A549 (cell line): ENCODE measurements at regions of chr1 and their contacts with region 1.

Region 1: DNA sequence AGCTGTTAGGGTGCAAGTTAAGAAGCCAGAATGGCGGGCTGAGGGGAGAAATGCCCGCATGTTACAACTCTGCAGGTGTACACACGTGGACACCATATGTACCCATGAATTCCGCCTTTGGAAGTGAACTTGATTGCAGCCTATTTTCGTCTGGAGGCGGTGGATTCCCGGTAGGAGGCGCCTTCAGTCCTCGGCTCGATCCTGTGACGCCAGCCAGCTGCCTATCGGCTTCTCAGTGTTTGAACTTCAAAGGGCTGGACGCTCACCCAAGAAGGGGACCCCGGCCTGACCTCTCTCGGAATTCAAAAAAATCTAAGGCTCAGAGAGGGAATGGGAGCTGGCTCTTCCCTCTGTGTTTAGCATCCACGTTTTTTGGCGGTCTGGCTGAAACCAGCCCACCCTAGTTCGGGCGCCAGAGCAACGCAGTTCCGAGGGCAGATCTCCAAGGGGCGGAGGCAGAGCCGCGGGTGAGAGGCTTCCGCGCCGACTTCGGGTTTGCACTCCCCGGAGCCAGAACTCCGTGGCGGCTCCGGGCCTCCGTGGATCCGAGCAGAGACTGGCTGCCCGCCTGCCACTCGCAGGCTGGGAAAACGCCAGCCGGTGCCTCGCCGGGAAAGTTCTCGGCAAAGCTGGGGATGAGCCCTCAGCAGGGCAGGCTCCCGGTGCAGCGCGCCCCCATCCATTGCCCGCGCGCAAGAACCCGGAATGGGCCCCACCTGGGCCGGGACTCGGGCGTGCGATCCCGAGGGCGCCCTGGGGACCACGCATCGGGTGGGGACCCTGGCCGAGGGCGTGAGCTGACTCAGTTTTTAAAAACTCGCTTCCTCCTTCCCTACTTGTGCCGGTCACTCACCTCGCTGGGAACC is 996 bp upstream of the TMEM51 start:
- DNase-seq: peak; percentile 87 to 89
- ATAC-seq: peak; percentile 75 to 77
- H3K4me3 ChIP-seq: peak overlapping the region; percentile 88
- H3K27ac ChIP-seq: peak overlapping the region; percentile 93 to 99
- H3K4me1 ChIP-seq: peaks cover 35% of the 10 kb centered on the region
- CTCF ChIP-seq: peak; percentile 66
- EP300 ChIP-seq: no peak
- POLR2A ChIP-seq: no peak
- RAD21 ChIP-seq: peak; percentile 78 to 88

Region 2: DNA sequence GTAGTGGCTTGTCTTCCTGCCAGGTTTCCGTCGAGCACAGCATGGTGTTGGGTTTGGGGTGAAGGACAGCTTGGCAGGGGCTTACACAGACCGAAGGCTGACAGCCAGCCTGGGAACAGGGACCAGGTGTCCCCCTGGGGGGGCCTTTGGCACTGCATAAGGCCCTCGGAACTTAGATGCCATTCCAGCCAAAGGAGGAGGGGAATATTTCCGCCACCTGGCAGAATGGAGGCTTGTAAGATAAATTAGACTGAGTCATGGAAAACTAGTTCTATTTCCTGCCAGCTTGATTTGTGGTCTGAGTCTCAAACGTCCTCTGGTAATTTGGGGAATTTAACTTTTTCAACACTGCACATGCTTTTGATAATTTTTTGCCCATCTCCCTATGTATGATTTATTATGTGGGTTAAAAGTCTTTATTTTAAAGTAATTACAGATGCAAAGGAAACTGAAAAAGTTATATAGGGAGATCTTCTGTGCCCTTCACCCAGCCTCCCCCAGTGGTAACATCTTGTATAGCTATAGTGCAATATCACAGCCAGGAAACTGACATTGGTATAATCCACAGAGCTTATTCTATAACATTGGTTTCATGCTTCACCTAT is 10.5 kb before region 1 on chr1:
- CTCF ChIA-PET with region 1: interaction called, 24 read pairs
- POLR2A ChIA-PET with region 1: no interaction called
- DNase-seq: no peak
- ATAC-seq: no peak
- H3K4me3 ChIP-seq: no peak overlapping the region
- H3K27ac ChIP-seq: no peak overlapping the region
- H3K4me1 ChIP-seq: no peaks in the 10 kb centered on the region
- CTCF ChIP-seq: no peak
- EP300 ChIP-seq: no peak
- POLR2A ChIP-seq: no peak
- RAD21 ChIP-seq: no peak

Region 3: DNA sequence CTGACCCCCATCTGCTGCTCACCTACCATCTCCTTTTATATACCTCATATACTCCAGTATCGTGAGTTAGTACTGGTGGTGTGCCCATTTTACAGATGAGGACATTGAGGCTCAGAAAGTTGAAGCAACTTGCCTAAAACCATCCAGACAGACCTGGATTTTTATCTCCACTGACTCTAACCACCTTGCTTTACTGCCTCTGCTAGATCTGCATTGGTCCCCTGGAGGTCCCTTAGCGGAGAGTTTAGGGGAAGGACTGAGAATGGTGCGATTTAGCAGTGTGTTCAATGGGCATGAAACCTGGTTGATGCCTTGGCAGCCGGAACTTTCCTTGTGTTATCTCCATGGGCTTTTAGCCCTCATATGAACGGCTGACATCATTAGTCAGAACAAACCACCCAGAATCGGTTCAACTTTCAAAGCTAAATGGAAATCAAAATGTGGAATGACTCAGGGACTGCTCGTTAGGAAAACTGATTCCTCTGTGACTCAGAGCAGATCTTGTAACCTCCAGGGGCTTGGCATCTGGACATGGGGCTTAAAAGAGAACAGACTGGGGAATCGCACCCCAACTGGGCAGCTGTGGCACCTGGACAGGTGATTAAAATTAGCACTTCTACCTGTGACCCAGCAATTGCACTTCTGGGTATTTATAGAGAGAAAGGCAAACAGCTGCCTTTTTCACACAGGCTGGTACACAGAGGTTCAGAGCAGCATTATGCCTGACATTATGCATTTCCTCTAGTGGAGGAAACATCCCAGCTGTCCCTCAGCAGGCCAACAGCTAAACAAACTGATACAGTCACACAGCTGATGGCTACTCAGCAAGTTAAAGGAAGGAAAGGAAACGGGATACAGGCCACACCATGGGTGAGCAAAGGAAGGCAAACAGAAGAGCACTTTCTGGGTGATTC is 26.3 kb after region 1 on chr1:
- CTCF ChIA-PET with region 1: interaction called, 28 read pairs
- POLR2A ChIA-PET with region 1: interaction called, 8 read pairs
- DNase-seq: peak in 1 of 2 experiments; percentile 79
- ATAC-seq: peak; percentile 87 to 91
- H3K4me3 ChIP-seq: no peak overlapping the region
- H3K27ac ChIP-seq: peak overlapping the region; percentile 82 to 88
- H3K4me1 ChIP-seq: peaks cover 74% of the 10 kb centered on the region
- CTCF ChIP-seq: no peak
- EP300 ChIP-seq: peak; percentile 59 to 70; a peak in 2 of 5 replicates
- POLR2A ChIP-seq: no peak
- RAD21 ChIP-seq: no peak

Region 4: GRCh38 chr1:15196807-15197530 is 44.4 kb after region 1 on chr1:
- CTCF ChIA-PET with region 1: interaction called, 78 read pairs
- POLR2A ChIA-PET with region 1: interaction called, 7 read pairs
- DNase-seq: peak in 1 of 2 experiments; percentile 39
- ATAC-seq: peak in 1 of 2 experiments; percentile 65; a peak in 3 of 6 replicates
- H3K4me3 ChIP-seq: no peak overlapping the region
- H3K27ac ChIP-seq: peak overlapping the region; percentile 71 to 93
- H3K4me1 ChIP-seq: peaks cover 80% of the 10 kb centered on the region
- CTCF ChIP-seq: no peak
- EP300 ChIP-seq: no peak
- POLR2A ChIP-seq: no peak
- RAD21 ChIP-seq: no peak

Region 5: DNA sequence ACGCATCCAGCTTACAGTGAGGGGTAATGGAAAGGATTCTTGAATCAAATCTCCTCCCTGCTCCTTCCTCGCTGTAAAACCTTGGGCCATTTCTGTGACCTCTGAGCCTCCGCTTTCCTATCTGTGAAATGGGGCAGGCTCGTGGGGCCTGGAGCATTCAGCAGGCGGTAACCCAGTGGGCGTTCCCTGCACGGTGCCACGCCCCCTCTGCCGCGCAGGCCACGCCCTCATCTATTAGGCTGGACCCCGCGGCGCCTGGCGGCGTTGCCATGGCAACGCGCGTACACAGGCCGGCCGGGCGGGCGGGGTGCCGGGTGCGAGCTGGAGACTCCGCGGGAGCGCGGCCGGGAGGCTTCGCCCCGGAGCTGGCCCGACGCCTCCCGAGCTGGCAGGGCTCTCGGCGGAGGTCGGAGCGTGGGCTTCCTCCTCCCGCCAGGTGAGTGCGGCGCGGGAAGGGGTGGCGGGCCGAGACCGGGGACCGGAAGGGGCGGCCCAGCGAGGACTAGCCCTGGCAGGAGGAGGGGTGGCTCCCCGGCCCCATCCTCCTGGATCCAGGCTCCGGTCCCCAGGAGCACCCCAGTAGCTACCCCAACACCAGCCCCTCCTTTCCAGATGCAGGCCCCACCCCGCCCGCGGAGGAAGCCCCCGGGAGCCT is 94.5 kb after region 1 on chr1 and contains the start of gene FHAD1:
- CTCF ChIA-PET with region 1: interaction called, 12 read pairs
- POLR2A ChIA-PET with region 1: no interaction called
- DNase-seq: peak; percentile 59 to 78
- ATAC-seq: peak; percentile 88 to 92
- H3K4me3 ChIP-seq: peak within 1 kb of the TSS; percentile 63
- H3K27ac ChIP-seq: peak within 1 kb of the TSS; percentile 75 to 86
- H3K4me1 ChIP-seq: no peaks in the 10 kb centered on the region
- CTCF ChIP-seq: no peak
- EP300 ChIP-seq: no peak
- POLR2A ChIP-seq: no peak
- RAD21 ChIP-seq: no peak
- polyA plus RNA-seq, gene FHAD1: 0.28 and 0.31 TPM in 2 replicates

Region 6: GRCh38 chr1:15272009-15272788 is 119.6 kb after region 1 on chr1:
- CTCF ChIA-PET with region 1: interaction called, 133 read pairs
- POLR2A ChIA-PET with region 1: no interaction called
- DNase-seq: peak; percentile 71
- ATAC-seq: peak; percentile 97 to 98
- H3K4me3 ChIP-seq: no peak overlapping the region
- H3K27ac ChIP-seq: peak overlapping the region; percentile 19 to 81; a peak in 4 of 6 replicates
- H3K4me1 ChIP-seq: peaks cover 5% of the 10 kb centered on the region; the same call in 1 of the 3 replicates
- CTCF ChIP-seq: peak; percentile 75
- EP300 ChIP-seq: no peak
- POLR2A ChIP-seq: no peak
- RAD21 ChIP-seq: peak; percentile 89 to 90

Region 7: DNA sequence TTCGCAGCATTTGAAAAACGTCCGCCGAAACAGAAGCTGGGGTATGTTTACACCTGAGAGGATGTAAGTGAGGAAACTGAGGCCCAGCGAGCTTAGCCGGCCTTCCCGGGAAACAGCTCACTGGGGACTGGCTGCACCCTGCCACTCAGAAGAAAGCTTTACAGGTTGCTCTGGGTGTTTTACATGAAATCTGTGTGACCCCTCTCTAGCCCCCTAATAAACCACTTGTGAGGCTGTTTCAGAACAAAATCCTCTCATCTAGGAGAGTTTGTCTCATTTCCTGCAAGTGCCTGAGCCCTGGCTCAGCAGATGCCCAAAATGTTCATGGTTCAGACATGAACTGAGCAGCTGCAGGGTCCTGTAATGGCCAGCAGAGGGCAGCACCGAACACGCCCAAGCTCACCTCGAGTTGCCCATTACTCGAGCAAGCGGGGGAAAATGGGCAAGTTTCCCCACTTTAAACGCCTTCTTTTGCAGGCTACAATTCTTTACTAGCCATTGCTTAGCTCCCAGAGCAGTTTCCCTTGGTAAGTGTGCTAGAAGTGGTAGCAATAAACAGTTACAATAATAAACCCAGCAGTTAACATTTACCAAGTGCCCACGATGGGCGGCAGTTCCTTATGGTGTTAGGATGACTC is 170.9 kb after region 1 on chr1:
- CTCF ChIA-PET with region 1: interaction called, 10 read pairs
- POLR2A ChIA-PET with region 1: no interaction called
- DNase-seq: peak; percentile 46 to 83
- ATAC-seq: peak; percentile 94 to 95
- H3K4me3 ChIP-seq: no peak overlapping the region
- H3K27ac ChIP-seq: peak overlapping the region; percentile 78 to 87
- H3K4me1 ChIP-seq: peaks cover 18% of the 10 kb centered on the region
- CTCF ChIP-seq: peak; percentile 85
- EP300 ChIP-seq: no peak
- POLR2A ChIP-seq: no peak
- RAD21 ChIP-seq: peak; percentile 82 to 84